Panc1 (cell line): ENCODE measurements at regions of chr16 and their contacts with region 1.

Region 1: GRCh38 chr16:21083729-21084268 is 66.8 kb downstream of the DNAH3 start:
- DNase-seq: peak; percentile 33
- ATAC-seq: peak; percentile 90
- H3K4me3 ChIP-seq: no peak overlapping the region
- H3K27ac ChIP-seq: 0 out of 2 replicates have a peak overlapping the region, but pooled peaks have one; percentile 31
- H3K4me1 ChIP-seq: no peaks in the 10 kb centered on the region
- H3K27me3 ChIP-seq: no peaks in the 10 kb centered on the region
- CTCF ChIP-seq: peak; percentile 87

Region 2: DNA sequence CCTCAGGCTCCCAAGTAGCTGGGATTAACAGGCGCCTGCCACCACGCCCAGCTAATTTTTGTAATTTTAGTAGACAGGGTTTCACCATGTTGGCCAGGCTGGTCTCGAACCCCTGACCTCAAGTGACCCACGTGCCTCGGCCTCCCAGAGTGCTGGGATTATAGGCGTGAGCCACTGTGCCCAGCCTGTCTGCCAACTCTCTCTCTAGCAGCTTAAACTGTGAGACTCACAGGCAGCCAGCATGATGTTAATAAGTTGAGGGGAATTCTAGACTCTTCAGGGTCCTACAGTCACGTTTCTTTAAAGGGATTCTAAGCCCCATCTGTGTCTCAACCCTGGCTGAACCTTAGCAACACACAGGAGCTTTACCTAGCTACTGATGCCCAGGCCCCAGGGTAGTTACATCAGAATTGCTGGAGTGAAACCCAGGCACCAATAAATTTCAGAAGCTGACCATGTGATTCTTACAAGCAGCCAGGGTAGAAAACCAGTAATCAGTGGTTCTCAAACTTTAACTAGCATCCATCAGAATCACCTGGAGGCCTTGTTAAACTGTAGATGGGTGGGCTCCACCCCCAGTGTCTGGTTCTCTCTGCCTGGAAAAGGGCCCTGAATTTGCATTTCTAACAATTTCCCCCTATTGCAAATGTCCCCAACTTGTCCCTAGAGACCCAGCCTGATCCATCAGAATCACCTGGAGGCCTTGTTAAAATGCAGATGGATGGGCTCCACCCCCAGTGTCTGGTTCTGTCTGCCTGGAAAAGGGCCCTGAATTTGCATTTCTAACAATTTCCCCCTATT is 1229.9 kb before region 1 on chr16:
- CTCF ChIA-PET with region 1: interaction called, 10 read pairs
- POLR2A ChIA-PET with region 1: no interaction called
- in situ Hi-C with region 1: no loop called
- intact Hi-C with region 1: no loop called
- DNase-seq: no peak
- ATAC-seq: no peak
- H3K4me3 ChIP-seq: no peak overlapping the region
- H3K27ac ChIP-seq: no peak overlapping the region; the same call in 1 of the 2 replicates
- H3K4me1 ChIP-seq: no peaks in the 10 kb centered on the region
- H3K27me3 ChIP-seq: no peaks in the 10 kb centered on the region
- CTCF ChIP-seq: no peak

Region 3: DNA sequence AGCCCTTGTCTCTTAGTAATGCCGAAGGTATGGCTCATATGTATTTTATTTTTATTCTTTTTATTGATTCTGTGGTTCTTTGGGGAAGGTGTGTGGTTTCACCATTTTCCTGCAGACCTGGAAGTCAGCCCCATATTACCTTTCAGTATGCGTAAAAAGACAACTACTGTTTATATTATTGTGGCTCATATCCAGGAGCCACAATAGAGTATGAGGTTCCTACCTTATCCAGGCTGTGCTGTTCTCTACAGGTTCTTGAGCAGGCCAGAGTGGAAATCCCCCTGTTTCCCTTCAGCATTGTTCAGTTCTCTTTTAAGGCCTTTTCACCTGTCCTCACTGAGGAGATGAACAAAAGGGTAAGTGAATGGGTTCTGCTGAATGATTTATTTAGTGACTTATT is 244.3 kb before region 1 on chr16:
- CTCF ChIA-PET with region 1: no interaction called
- POLR2A ChIA-PET with region 1: no interaction called
- in situ Hi-C with region 1: no loop called
- intact Hi-C with region 1: no loop called
- DNase-seq: no peak
- ATAC-seq: no peak
- H3K4me3 ChIP-seq: no peak overlapping the region
- H3K27ac ChIP-seq: no peak overlapping the region
- H3K4me1 ChIP-seq: no peaks in the 10 kb centered on the region
- H3K27me3 ChIP-seq: no peaks in the 10 kb centered on the region
- CTCF ChIP-seq: no peak

Region 4: DNA sequence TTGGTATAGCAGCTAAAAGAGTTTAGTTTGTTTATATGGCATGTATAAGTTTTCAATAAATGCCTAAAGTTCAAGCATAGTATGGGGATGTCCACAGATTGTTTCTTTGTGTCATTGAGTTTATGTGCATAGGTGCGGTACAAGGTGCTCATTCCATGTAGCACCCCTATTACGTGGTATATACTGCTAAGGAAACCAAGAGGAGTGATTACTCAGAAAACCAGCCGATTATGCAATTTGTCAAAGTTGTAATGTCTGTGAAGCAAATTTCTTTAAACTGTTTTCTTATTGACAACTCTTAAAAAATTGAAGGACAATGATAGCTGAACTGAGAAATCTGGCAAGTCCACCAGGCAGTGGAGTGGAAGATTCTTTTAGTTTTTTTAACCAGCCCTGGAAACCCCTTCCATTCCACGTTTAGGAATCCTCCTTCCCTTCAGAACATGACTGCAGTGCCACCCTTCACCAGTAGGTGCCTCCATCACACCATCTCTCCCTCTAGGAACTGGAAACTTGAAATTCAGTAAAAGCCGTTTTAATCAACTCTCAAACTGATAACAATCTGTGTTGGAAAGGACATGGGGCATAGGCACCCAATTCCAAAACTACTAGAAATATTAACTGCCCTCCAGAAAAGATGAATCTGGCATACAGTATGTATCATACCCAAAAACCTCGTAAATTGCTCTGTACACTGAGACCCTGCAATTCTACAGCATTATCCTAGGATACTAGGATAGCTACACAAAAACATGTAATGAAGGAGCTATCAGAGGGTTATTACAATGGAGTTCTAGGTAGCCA is 234.0 kb before region 1 on chr16:
- CTCF ChIA-PET with region 1: interaction called, 6 read pairs
- POLR2A ChIA-PET with region 1: no interaction called
- in situ Hi-C with region 1: no loop called
- intact Hi-C with region 1: loop called (anchors 2 kb)
- DNase-seq: peak; percentile 71
- ATAC-seq: peak; percentile 72; the same call in 1 of the 2 replicates
- H3K4me3 ChIP-seq: no peak overlapping the region
- H3K27ac ChIP-seq: peak overlapping the region; percentile 45; the same call in 1 of the 2 replicates
- H3K4me1 ChIP-seq: peaks cover 23% of the 10 kb centered on the region
- H3K27me3 ChIP-seq: no peaks in the 10 kb centered on the region
- CTCF ChIP-seq: peak; percentile 95

Region 5: GRCh38 chr16:20874088-20874581 is 209.7 kb before region 1 on chr16:
- CTCF ChIA-PET with region 1: interaction called, 10 read pairs
- POLR2A ChIA-PET with region 1: no interaction called
- in situ Hi-C with region 1: no loop called
- intact Hi-C with region 1: no loop called
- DNase-seq: no peak
- ATAC-seq: no peak
- H3K4me3 ChIP-seq: no peak overlapping the region
- H3K27ac ChIP-seq: no peak overlapping the region
- H3K4me1 ChIP-seq: peaks cover 13% of the 10 kb centered on the region
- H3K27me3 ChIP-seq: no peaks in the 10 kb centered on the region
- CTCF ChIP-seq: no peak

Region 6: GRCh38 chr16:20920799-20921198 is 163.0 kb before region 1 on chr16:
- CTCF ChIA-PET with region 1: no interaction called
- POLR2A ChIA-PET with region 1: interaction called, 11 read pairs
- in situ Hi-C with region 1: no loop called
- intact Hi-C with region 1: no loop called
- DNase-seq: no peak
- ATAC-seq: no peak
- H3K4me3 ChIP-seq: no peak overlapping the region
- H3K27ac ChIP-seq: no peak overlapping the region
- H3K4me1 ChIP-seq: no peaks in the 10 kb centered on the region
- H3K27me3 ChIP-seq: no peaks in the 10 kb centered on the region
- CTCF ChIP-seq: no peak

Region 7: DNA sequence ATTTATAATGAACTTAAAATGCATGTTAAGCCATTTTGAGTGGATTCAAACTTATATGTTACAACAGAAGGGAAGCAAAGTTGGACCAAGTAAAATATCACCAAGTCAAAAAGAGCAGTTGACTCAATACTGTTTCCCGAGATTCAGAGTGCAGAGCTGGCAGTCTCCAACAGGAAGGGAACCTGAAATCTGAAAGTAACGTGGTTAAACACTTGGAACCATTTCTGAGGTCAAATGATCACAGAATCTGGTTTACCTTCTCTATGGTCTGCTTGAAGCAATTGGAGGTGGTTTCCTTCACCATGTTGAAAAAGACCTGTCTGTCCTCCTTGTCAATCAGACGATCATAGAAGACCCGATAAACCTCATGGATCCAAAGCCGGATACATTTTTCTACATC is 96.8 kb before region 1 on chr16:
- CTCF ChIA-PET with region 1: no interaction called
- POLR2A ChIA-PET with region 1: no interaction called
- in situ Hi-C with region 1: no loop called
- intact Hi-C with region 1: no loop called
- DNase-seq: no peak
- ATAC-seq: no peak
- H3K4me3 ChIP-seq: no peak overlapping the region
- H3K27ac ChIP-seq: no peak overlapping the region
- H3K4me1 ChIP-seq: no peaks in the 10 kb centered on the region
- H3K27me3 ChIP-seq: no peaks in the 10 kb centered on the region
- CTCF ChIP-seq: no peak

Region 8: DNA sequence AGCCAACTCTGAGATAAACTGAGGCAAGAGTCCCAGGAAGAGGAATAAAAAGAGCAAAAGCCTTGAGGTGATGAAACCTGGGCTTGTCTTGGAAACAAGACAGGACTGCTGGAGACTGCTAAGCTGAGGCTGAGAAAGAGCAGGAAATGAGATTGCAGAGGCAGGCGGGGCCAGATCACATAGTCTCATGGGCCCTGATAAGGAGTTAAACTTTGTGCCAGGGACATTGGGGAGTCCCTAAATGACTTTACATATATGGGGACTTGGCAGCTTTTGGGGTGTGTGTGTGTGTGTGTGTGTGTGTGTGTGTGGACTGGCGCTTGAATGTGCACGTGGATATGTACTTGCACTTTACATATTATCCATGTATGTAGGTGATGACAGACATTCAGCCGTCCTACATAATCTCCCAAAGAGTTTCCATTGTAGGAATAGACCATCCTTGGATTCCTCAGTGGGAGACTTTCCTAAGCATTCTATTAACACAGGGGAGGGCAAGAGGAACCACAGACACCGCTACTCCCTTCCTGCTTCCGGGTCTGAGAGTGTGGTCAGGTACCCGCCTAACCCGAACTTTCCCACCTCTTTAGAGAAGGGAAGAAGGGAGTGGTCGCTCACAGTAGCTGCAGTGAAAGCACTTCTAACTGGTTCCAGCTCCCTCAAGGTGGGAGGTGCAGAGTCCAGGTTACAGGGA is 60.1 kb before region 1 on chr16:
- CTCF ChIA-PET with region 1: no interaction called
- POLR2A ChIA-PET with region 1: no interaction called
- in situ Hi-C with region 1: no loop called
- intact Hi-C with region 1: no loop called
- DNase-seq: no peak
- ATAC-seq: no peak
- H3K4me3 ChIP-seq: no peak overlapping the region
- H3K27ac ChIP-seq: no peak overlapping the region
- H3K4me1 ChIP-seq: no peaks in the 10 kb centered on the region
- H3K27me3 ChIP-seq: no peaks in the 10 kb centered on the region
- CTCF ChIP-seq: no peak

Region 9: DNA sequence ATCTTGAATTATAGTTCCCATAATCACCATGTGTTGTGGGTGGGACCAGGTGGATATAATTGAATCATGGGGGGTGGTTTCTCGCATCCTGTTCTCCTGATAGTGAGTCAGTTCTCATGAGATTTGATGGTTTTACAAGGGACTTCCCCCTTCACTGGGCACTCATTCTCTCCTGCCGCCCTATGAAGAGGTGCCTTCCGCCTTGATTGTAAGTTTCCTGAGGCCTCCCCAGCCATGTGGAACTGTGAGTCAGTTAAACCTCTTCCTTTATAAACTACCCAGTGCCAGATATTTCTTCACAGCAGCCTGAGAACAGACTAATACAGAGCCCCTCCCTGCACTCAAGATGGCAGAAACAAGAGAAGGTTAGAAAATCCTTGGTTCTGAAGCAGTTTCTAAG is 101.0 kb after region 1 on chr16:
- CTCF ChIA-PET with region 1: no interaction called
- POLR2A ChIA-PET with region 1: interaction called, 16 read pairs
- in situ Hi-C with region 1: no loop called
- intact Hi-C with region 1: no loop called
- DNase-seq: no peak
- ATAC-seq: no peak
- H3K4me3 ChIP-seq: no peak overlapping the region
- H3K27ac ChIP-seq: no peak overlapping the region
- H3K4me1 ChIP-seq: 0 out of 2 replicates have a peak, but pooled peaks cover 4% of the 10 kb centered on the region
- H3K27me3 ChIP-seq: no peaks in the 10 kb centered on the region
- CTCF ChIP-seq: no peak